CD8-positive, alpha-beta memory T cell (primary cell): ENCODE measurements at regions of chr11 and their contacts with region 1.

Region 1: GRCh38 chr11:78188286-78189173 is at the starts of genes KCTD21 and USP35:
- DNase-seq: peak; percentile 83 to 93 (median 86)
- H3K4me3 ChIP-seq: peak within 1 kb of the TSS; percentile 97
- H3K4me3 Mint-ChIP-seq: peak within 1 kb of the TSS; percentile 96 to 100 (median 99)
- H3K27ac ChIP-seq: peak within 1 kb of the TSS; percentile 72
- H3K27ac Mint-ChIP-seq: peak within 1 kb of the TSS; percentile 85 to 100 (median 98)
- H3K4me1 ChIP-seq: peaks cover 38% of the 10 kb centered on the region
- H3K4me1 Mint-ChIP-seq: peaks cover 37 to 63% (median 52%) of the 10 kb centered on the region in 3 donors
- H3K27me3 ChIP-seq: no peaks in the 10 kb centered on the region
- H3K27me3 Mint-ChIP-seq: peaks cover 0 to 1% of the 10 kb centered on the region in 2 donors
- total RNA-seq, gene KCTD21: 4.6 to 4.9 TPM
- total RNA-seq, gene USP35: 4.4 TPM

Region 2: DNA sequence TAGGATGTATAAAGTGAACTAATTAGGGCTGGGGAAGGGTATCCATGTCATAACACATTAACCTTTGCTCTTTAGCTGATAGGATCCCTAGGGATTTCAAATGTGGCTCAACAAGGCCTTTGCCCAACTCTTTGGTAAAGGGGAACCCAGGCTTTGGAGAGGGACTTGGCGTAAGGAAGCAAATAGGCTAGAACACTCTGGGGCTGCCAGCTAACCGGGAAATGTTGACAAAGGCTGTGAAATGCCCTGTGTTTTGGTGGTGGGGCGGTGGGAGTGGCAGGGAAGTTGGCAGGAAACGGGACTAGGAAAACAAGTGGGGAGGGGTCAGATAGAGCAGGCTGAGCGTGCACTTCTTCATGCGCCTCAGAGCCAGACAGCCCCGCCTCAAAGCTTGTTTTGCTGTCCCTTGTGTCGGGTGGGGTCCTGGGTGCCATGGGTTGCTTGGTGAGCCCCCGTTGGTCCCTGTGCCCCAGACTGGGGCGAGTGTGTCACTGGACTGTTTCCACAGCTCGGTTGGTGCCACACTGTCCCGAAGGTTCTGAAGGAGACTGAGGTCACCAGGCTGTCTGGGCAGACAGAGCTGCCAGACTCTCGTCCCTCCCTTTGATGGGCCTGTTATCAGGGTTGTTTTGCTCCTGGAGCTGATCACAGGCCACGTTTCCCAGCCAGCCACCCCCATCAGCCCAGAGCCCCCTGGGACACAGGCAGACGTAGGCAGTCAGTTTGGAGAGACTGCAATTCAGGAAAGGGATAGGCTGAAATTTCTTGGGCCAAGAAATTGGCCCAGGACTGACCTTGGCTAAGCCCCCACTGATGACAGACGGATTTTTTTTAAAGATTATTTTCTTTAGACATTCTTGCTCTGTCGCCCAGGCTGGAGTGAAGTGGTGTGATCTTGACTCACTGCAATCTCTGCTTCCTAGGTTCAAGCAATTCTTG is 19.7 kb before region 1 on chr11:
- CTCF ChIA-PET with region 1: no interaction called
- POLR2A ChIA-PET with region 1: no interaction called
- DNase-seq: no peak
- H3K4me3 ChIP-seq: no peak overlapping the region
- H3K4me3 Mint-ChIP-seq: no peak overlapping the region
- H3K27ac ChIP-seq: no peak overlapping the region
- H3K27ac Mint-ChIP-seq: peak overlapping the region in 1 of 8 donors; percentile 13
- H3K4me1 ChIP-seq: no peaks in the 10 kb centered on the region
- H3K4me1 Mint-ChIP-seq: peaks cover 0 to 2% (median 0%) of the 10 kb centered on the region in 3 donors
- H3K27me3 ChIP-seq: no peaks in the 10 kb centered on the region
- H3K27me3 Mint-ChIP-seq: no peaks in the 10 kb centered on the region

Region 3: GRCh38 chr11:78202733-78203167 is 14.2 kb after region 1 on chr11:
- CTCF ChIA-PET with region 1: interaction called, 6 read pairs
- POLR2A ChIA-PET with region 1: interaction called, 12 read pairs
- DNase-seq: peak; percentile 37 to 88 (median 79)
- H3K4me3 ChIP-seq: peak overlapping the region; percentile 62
- H3K4me3 Mint-ChIP-seq: peak overlapping the region; percentile 44 to 89 (median 80)
- H3K27ac ChIP-seq: peak overlapping the region; percentile 57
- H3K27ac Mint-ChIP-seq: peak overlapping the region; percentile 88 to 99 (median 95)
- H3K4me1 ChIP-seq: peaks cover 40% of the 10 kb centered on the region
- H3K4me1 Mint-ChIP-seq: peaks cover 29 to 49% (median 40%) of the 10 kb centered on the region in 3 donors
- H3K27me3 ChIP-seq: no peaks in the 10 kb centered on the region
- H3K27me3 Mint-ChIP-seq: no peaks in the 10 kb centered on the region